ENCODE measurements at regions of chr6 and their contacts with region 1.

Region 1: GRCh38 chr6:89242574-89243330 is 25.6 kb upstream of the GABRR1 start:
- ATAC-seq: peak; percentile 61 to 89 (median 70)
- H3K4me3 ChIP-seq: no peak overlapping the region
- H3K27ac ChIP-seq: no peak overlapping the region
- H3K4me1 ChIP-seq: peaks cover 9 to 12% of the 10 kb centered on the region in 2 donors

Region 2: GRCh38 chr6:88975369-88975768 is 267.4 kb before region 1 on chr6:
- in situ Hi-C with region 1: loop called in 4 of 9 experiments (anchors 10 to 25 kb)
- ATAC-seq: no peak
- H3K4me3 ChIP-seq: no peak overlapping the region
- H3K27ac ChIP-seq: no peak overlapping the region
- H3K4me1 ChIP-seq: no peaks in the 10 kb centered on the region

Region 3: GRCh38 chr6:89080542-89081422 is 162.0 kb before region 1 on chr6 and contains the start of gene PNRC1:
- in situ Hi-C with region 1: no loop called
- ATAC-seq: peak; percentile 58 to 83 (median 76)
- H3K4me3 ChIP-seq: peak within 1 kb of the TSS; percentile 67 to 92 (median 81)
- H3K27ac ChIP-seq: peak within 1 kb of the TSS; percentile 79 to 90
- H3K4me1 ChIP-seq: peaks cover 8 to 12% of the 10 kb centered on the region in 2 donors
- total RNA-seq, gene PNRC1: 39.4 to 201 (median 62.8) TPM

Region 4: DNA sequence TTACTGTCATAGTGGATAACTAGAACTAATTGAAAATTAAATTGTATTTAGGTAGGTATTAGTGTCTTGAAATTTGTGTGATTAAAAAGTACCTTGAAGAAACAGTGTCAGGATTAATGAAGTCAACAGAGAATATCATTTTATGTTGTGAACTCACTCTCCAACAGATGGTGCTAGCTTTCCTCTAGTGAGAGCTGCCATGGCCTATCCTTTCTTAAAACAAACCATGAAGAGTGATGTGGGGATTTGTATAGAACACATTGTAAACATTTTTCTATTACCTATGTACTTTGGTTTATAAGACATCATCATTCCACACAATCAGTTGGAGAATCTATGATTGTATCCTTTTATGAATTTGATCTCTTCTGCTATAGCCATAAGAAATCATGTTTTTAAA is 120.1 kb before region 1 on chr6:
- in situ Hi-C with region 1: loop called in 1 of 9 experiments (anchors 10 kb)
- ATAC-seq: peak in 3 of 8 experiments; percentile 73 to 77 (median 77)
- H3K4me3 ChIP-seq: no peak overlapping the region
- H3K27ac ChIP-seq: no peak overlapping the region
- H3K4me1 ChIP-seq: no peaks in the 10 kb centered on the region

Measured in motor neuron (in vitro differentiated cells).